Activated B cell treated with CpG ODN at 0.5 μM for 24 hours (primary cell): ENCODE measurements at regions of chr9 and their contacts with region 1.

Region 1: GRCh38 chr9:75071530-75072124 is 16.3 kb downstream of the NMRK1 start:
- DNase-seq: no peak
- ATAC-seq: peak; percentile 52
- H3K4me3 Mint-ChIP-seq: no peak overlapping the region
- H3K27ac Mint-ChIP-seq: no peak overlapping the region
- H3K4me1 Mint-ChIP-seq: peaks cover 9% of the 10 kb centered on the region
- H3K27me3 Mint-ChIP-seq: no peaks in the 10 kb centered on the region
- CTCF ChIP-seq: no peak

Region 2: DNA sequence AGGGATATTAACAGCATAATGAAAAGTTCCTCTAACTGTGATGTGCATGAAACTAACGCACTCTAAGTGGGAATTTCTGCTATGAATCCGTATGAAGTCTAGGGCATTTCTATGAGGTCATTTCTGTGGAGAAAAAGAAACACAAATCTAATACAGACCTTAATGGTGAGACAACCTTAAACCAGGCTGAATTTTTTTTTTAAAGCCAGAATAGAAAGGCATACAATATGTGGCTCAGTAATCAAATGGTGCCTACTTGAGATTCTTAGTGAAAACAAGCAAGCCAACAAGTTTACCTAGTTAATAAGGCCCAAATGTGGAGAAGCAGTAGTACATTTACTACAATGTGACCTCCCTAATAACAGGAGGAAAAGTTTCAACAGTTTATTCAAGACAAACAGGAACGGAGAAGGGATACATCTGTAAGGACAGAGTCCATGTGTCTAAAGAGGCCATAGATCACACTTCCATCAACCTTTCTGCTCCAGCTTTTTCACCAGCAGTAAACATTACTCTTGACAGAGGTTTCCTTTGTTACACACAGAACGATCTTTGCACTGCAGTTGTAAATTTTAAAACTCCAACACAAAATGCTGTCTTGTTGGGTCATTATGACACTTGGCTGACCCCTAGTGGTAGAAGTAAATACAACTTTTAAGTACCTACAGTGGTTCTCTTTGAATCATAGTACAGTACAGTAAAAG is 69.8 kb before region 1 on chr9:
- CTCF ChIA-PET with region 1: interaction called, 13 read pairs
- POLR2A ChIA-PET with region 1: no interaction called
- intact Hi-C with region 1: no loop called
- DNase-seq: no peak
- ATAC-seq: peak; percentile 85
- H3K4me3 Mint-ChIP-seq: no peak overlapping the region
- H3K27ac Mint-ChIP-seq: no peak overlapping the region
- H3K4me1 Mint-ChIP-seq: peaks cover 9% of the 10 kb centered on the region
- H3K27me3 Mint-ChIP-seq: no peaks in the 10 kb centered on the region
- CTCF ChIP-seq: peak; percentile 40

Region 3: GRCh38 chr9:75053869-75054268 is 17.8 kb before region 1 on chr9:
- CTCF ChIA-PET with region 1: interaction called, 3 read pairs
- POLR2A ChIA-PET with region 1: no interaction called
- intact Hi-C with region 1: loop called (anchors 2 kb)
- DNase-seq: peak; percentile 43
- ATAC-seq: peak; percentile 99
- H3K4me3 Mint-ChIP-seq: peak overlapping the region; percentile 59
- H3K27ac Mint-ChIP-seq: peak overlapping the region; percentile 74
- H3K4me1 Mint-ChIP-seq: peaks cover 30% of the 10 kb centered on the region
- H3K27me3 Mint-ChIP-seq: no peaks in the 10 kb centered on the region
- CTCF ChIP-seq: no peak